CD4-positive, alpha-beta memory T cell (primary cell): ENCODE measurements at regions of chr1 and their contacts with region 1.

Region 1: GRCh38 chr1:150578965-150579798 is at the start of gene MCL1:
- DNase-seq: peak; percentile 86 to 94 (median 89)
- H3K4me3 ChIP-seq: peak within 1 kb of the TSS; percentile 96 to 100
- H3K4me3 Mint-ChIP-seq: peak within 1 kb of the TSS; percentile 98 to 100 (median 99)
- H3K27ac ChIP-seq: peak within 1 kb of the TSS; percentile 97
- H3K27ac Mint-ChIP-seq: peak within 1 kb of the TSS; percentile 94 to 99 (median 99)
- H3K4me1 ChIP-seq: peaks cover 33% of the 10 kb centered on the region
- H3K4me1 Mint-ChIP-seq: peaks cover 18 to 58% (median 28%) of the 10 kb centered on the region in 4 donors
- H3K27me3 ChIP-seq: no peaks in the 10 kb centered on the region
- H3K27me3 Mint-ChIP-seq: no peaks in the 10 kb centered on the region
- total RNA-seq, gene MCL1: 314 to 331 TPM

Region 2: GRCh38 chr1:150515328-150516048 is 63.7 kb before region 1 on chr1 and contains the start of gene FALEC:
- CTCF ChIA-PET with region 1: no interaction called
- POLR2A ChIA-PET with region 1: interaction called, 13 read pairs
- intact Hi-C with region 1: no loop called
- DNase-seq: peak; percentile 87 to 91 (median 89)
- H3K4me3 ChIP-seq: peak within 1 kb of the TSS; percentile 69 to 73
- H3K4me3 Mint-ChIP-seq: peak within 1 kb of the TSS; percentile 83 to 94 (median 92)
- H3K27ac ChIP-seq: peak within 1 kb of the TSS; percentile 53
- H3K27ac Mint-ChIP-seq: peak within 1 kb of the TSS; percentile 61 to 93 (median 89)
- H3K4me1 ChIP-seq: peaks cover 11% of the 10 kb centered on the region
- H3K4me1 Mint-ChIP-seq: peaks cover 8 to 20% (median 12%) of the 10 kb centered on the region in 4 donors
- H3K27me3 ChIP-seq: no peaks in the 10 kb centered on the region
- H3K27me3 Mint-ChIP-seq: no peaks in the 10 kb centered on the region
- total RNA-seq, gene FALEC: 0.64 TPM in 1 of 2 experiments, not detected in the other

Region 3: GRCh38 chr1:150548632-150549495 is 30.3 kb before region 1 on chr1 and contains the start of gene ADAMTSL4:
- CTCF ChIA-PET with region 1: no interaction called
- POLR2A ChIA-PET with region 1: interaction called, 13 read pairs
- intact Hi-C with region 1: no loop called
- DNase-seq: peak in 2 of 5 donors; percentile 32 to 36
- H3K4me3 ChIP-seq: peak within 1 kb of the TSS; percentile 33 to 47
- H3K4me3 Mint-ChIP-seq: peak within 1 kb of the TSS; percentile 81 to 87 (median 82)
- H3K27ac ChIP-seq: no peak within 1 kb of the TSS
- H3K27ac Mint-ChIP-seq: peak within 1 kb of the TSS in 3 of 7 donors; percentile 25 to 61 (median 59)
- H3K4me1 ChIP-seq: peaks cover 23% of the 10 kb centered on the region
- H3K4me1 Mint-ChIP-seq: peaks cover 13 to 25% (median 15%) of the 10 kb centered on the region in 4 donors
- H3K27me3 ChIP-seq: no peaks in the 10 kb centered on the region
- H3K27me3 Mint-ChIP-seq: peaks cover 11 to 14% of the 10 kb centered on the region in 2 donors
- total RNA-seq, gene ADAMTSL4: 0.23 to 0.33 TPM

Region 4: DNA sequence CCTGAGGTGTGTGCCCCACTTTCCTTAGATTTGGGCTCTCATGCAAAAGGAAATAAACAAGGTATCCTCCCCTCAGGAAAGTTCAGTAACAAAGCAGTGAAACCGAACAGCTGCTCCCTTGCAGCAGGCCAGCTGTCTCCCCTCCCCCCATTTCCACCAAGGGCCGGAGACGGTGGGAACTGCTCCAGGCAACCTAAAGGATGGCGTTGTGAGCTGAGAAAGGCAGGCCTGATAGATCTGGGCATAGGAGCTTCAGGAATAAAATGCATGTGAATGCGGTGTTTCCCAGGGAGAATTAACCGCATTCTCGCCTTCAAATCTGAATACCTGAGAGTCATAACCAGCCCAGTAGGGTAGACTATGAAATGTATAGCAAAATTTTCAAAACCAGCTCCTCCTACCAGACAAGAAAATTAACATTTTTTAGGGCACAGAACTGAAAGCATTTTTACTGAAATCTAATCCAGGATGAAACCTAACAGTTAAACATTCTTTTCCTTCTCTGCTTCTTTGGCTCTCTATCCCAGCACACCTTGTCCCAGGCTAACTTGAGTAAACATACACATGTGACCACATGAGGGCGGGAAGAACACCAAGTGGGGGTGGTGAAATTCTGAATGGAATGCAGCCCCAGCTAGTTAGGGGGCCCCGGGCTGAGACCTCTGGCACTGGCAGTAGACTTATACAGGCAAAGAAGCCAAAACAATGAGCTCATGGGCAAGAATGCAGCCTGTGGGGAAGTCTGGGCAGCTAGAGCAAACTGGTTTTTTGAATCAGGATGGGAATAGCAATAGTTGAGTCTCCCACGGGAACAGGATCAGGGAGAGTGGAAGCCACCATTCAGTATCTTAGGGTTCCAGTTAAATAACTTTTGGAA is 11.2 kb before region 1 on chr1:
- CTCF ChIA-PET with region 1: interaction called, 433 read pairs
- POLR2A ChIA-PET with region 1: interaction called, 1,751 read pairs
- intact Hi-C with region 1: loop called (anchors 1 kb)
- DNase-seq: peak in 3 of 5 donors; percentile 33 to 72 (median 67)
- H3K4me3 ChIP-seq: peak overlapping the region; percentile 43 to 45
- H3K4me3 Mint-ChIP-seq: peak overlapping the region; percentile 87 to 98 (median 89)
- H3K27ac ChIP-seq: peak overlapping the region; percentile 58
- H3K27ac Mint-ChIP-seq: peak overlapping the region; percentile 93 to 99 (median 94)
- H3K4me1 ChIP-seq: peaks cover 93% of the 10 kb centered on the region
- H3K4me1 Mint-ChIP-seq: peaks cover 48 to 97% (median 74%) of the 10 kb centered on the region in 4 donors
- H3K27me3 ChIP-seq: no peaks in the 10 kb centered on the region
- H3K27me3 Mint-ChIP-seq: no peaks in the 10 kb centered on the region

Region 5: DNA sequence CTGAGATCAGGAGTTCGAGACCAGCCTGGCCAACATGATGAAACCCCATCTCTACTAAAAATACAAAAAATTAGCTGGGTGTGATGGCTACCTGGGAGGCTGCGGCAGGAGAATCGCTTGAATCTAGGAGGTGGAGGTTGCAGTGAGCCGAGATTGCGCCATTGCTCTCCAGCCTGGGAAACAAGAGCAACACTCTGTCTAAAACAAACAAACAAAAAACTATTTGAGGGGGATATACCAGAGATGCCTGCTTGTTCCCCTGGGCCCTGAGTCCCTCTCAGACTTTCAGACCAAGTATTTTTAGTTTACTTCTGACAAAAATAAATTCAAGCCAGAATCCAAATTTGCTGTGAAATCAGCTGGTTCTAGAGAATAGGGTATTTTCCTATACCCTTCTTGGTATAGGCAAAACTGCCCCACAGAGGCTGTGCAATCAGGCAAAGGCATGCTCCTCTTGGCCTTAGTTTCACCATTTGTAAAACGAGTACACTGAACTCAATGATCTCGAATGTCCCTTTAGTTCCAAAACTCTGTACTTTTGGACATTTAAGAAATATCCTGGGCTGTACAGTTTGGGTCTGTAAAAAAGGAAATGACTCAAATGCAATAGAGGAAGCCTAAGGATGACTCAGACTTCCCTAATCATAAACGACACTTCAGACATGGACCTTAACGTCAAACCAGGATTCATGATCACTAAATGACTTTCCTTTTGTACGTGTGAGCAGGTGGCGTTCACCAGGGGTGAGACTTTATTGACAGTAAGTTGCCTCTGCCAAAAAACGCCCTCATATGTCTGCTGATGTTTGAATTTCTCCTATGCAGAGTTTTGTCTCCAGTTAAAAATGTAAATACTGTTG is 34.1 kb after region 1 on chr1:
- CTCF ChIA-PET with region 1: interaction called, 47 read pairs
- POLR2A ChIA-PET with region 1: interaction called, 122 read pairs
- intact Hi-C with region 1: loop called (anchors 1 kb)
- DNase-seq: peak; percentile 41 to 83 (median 51)
- H3K4me3 ChIP-seq: no peak overlapping the region
- H3K4me3 Mint-ChIP-seq: peak overlapping the region; percentile 27 to 78 (median 58)
- H3K27ac ChIP-seq: peak overlapping the region; percentile 94
- H3K27ac Mint-ChIP-seq: peak overlapping the region; percentile 89 to 100 (median 99)
- H3K4me1 ChIP-seq: peaks cover 63% of the 10 kb centered on the region
- H3K4me1 Mint-ChIP-seq: peaks cover 44 to 70% (median 54%) of the 10 kb centered on the region in 4 donors
- H3K27me3 ChIP-seq: no peaks in the 10 kb centered on the region
- H3K27me3 Mint-ChIP-seq: no peaks in the 10 kb centered on the region

Region 6: DNA sequence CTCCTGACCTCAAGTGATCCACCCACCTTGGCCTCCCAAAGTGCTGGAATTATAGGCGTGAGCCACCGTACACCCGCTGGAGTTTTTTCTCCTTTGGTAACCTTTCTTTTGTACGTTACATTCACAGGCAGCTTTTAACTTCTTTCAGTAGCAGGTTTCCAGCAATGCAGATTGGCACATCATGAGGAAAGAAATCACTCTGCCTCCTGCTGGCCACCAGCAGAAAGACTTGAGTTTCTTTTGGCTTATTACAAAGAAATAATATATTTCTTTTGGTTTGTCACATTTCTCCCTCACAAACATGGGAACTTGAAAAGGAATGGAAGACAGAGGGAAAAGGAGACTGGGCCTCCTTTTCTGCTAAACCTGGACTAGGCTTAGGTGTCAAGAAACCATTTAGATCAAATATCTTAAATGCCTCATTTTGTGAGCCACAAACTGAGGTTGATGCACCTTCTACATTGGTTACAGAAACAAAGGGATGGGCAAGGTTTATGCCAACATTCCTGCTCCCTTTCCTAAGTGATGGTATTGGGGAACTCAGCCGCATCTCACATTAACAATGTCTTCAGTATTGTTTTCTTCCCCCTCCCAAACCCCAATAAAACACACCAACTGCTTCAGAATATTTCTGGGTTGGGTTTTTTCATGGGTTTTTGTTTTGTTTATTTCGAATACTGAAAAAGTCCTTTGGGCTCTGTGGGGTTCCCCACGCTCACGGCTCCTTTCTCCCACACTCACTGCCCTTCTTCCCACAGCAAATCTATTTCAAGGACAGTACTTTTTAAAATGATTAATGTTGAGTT is 42.5 kb after region 1 on chr1:
- CTCF ChIA-PET with region 1: interaction called, 47 read pairs
- POLR2A ChIA-PET with region 1: interaction called, 191 read pairs
- intact Hi-C with region 1: loop called (anchors 1 kb)
- DNase-seq: peak; percentile 66 to 71 (median 69)
- H3K4me3 ChIP-seq: no peak overlapping the region
- H3K4me3 Mint-ChIP-seq: peak overlapping the region in 7 of 8 donors; percentile 8 to 61 (median 35)
- H3K27ac ChIP-seq: peak overlapping the region; percentile 53
- H3K27ac Mint-ChIP-seq: peak overlapping the region; percentile 82 to 95 (median 91)
- H3K4me1 ChIP-seq: peaks cover 38% of the 10 kb centered on the region
- H3K4me1 Mint-ChIP-seq: peaks cover 32 to 64% (median 51%) of the 10 kb centered on the region in 4 donors
- H3K27me3 ChIP-seq: no peaks in the 10 kb centered on the region
- H3K27me3 Mint-ChIP-seq: no peaks in the 10 kb centered on the region

Region 7: GRCh38 chr1:150696590-150697524 is 117.7 kb after region 1 on chr1 and contains the start of gene GOLPH3L:
- CTCF ChIA-PET with region 1: no interaction called
- POLR2A ChIA-PET with region 1: interaction called, 17 read pairs
- intact Hi-C with region 1: loop called (anchors 1 kb)
- DNase-seq: peak; percentile 90 to 97 (median 93)
- H3K4me3 ChIP-seq: peak within 1 kb of the TSS; percentile 86 to 92
- H3K4me3 Mint-ChIP-seq: peak within 1 kb of the TSS; percentile 94 to 100 (median 98)
- H3K27ac ChIP-seq: peak within 1 kb of the TSS; percentile 70
- H3K27ac Mint-ChIP-seq: peak within 1 kb of the TSS; percentile 88 to 100 (median 96)
- H3K4me1 ChIP-seq: peaks cover 27% of the 10 kb centered on the region
- H3K4me1 Mint-ChIP-seq: peaks cover 17 to 40% (median 27%) of the 10 kb centered on the region in 4 donors
- H3K27me3 ChIP-seq: no peaks in the 10 kb centered on the region
- H3K27me3 Mint-ChIP-seq: peaks cover 1 to 3% of the 10 kb centered on the region in 2 donors
- total RNA-seq, gene GOLPH3L: 29.7 to 30.4 TPM